K562 (cell line): ENCODE measurements at regions of chr2 and their contacts with region 1.

Region 1: GRCh38 chr2:55010149-55010591 is 40.1 kb downstream of the RTN4 start:
- DNase-seq: peak in 2 of 4 experiments; percentile 30 to 57
- ATAC-seq: peak; percentile 44
- H3K4me3 ChIP-seq: no peak overlapping the region
- H3K27ac ChIP-seq: no peak overlapping the region
- H3K4me1 ChIP-seq: peaks cover 0 to 60% of the 10 kb centered on the region in 2 experiments; a peak in 4 of 5 replicates
- H3K27me3 ChIP-seq: no peaks in the 10 kb centered on the region
- CTCF ChIP-seq: no peak
- EP300 ChIP-seq: no peak
- POLR2A ChIP-seq: no peak
- RAD21 ChIP-seq: no peak

Region 2: GRCh38 chr2:54899576-54900200 is 110.5 kb before region 1 on chr2:
- CTCF ChIA-PET with region 1: no interaction called
- POLR2A ChIA-PET with region 1: no interaction called
- in situ Hi-C with region 1: no loop called
- intact Hi-C with region 1: loop called (anchors 5 kb)
- DNase-seq: peak in 2 of 4 experiments; percentile 38 to 63
- ATAC-seq: peak; percentile 87
- H3K4me3 ChIP-seq: no peak overlapping the region
- H3K27ac ChIP-seq: no peak overlapping the region
- H3K4me1 ChIP-seq: peaks cover 0 to 8% of the 10 kb centered on the region in 2 experiments; a peak in 3 of 5 replicates
- H3K27me3 ChIP-seq: peaks cover 0 to 16% of the 10 kb centered on the region in 2 experiments; a peak in 3 of 5 replicates
- CTCF ChIP-seq: peak; percentile 55 to 85 (median 68); a peak in 5 of 6 replicates
- EP300 ChIP-seq: no peak
- POLR2A ChIP-seq: no peak
- RAD21 ChIP-seq: peak; percentile 92 to 94